Posterior vena cava (tissue), 2 donors: ENCODE measurements at regions of chr5 and their contacts with region 1.

Region 1: GRCh38 chr5:129857116-129857515 is 47.1 kb upstream of the CHSY3 start:
- DNase-seq: no peak

Region 2: DNA sequence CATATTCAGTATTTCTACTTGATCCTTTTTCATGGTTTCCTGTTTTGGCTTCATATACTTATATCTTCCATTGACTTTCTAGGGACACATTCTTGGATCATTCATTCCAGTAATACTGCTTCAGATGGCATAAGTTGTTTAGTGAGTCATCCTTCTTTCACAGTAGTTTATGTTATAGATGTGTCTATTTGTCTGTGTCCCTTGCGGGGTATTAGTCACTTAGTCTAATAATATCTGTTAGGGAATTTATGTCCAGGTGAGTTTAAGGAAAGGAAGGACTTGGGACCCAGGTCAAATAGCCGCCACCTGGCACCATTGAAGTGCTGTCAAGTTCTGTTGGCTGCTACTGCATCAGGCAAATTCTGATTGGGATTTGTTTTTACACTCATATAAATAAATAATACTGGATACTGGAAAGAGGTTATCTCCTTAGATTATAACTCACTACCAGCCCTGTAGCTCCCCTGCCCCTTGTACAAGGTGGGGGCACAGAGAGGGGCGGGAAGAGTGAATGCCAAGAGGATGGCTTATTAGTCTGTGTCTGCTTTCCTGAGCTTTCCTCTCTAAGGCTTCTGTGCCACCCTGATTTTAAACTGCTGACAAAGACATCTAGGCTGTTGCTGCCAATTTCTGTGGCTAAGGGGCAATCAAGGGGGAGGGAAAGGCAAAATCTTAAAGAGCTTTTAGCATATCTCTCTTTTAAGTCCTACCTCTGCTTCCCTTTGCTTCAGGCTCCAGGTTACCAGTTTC is 1471.6 kb after region 1 on chr5:
- intact Hi-C with region 1: loop called in 1 of 2 experiments (anchors 5 kb)
- DNase-seq: no peak